B cell (primary cell): ENCODE measurements at regions of chr1 and their contacts with region 1.

Region 1: DNA sequence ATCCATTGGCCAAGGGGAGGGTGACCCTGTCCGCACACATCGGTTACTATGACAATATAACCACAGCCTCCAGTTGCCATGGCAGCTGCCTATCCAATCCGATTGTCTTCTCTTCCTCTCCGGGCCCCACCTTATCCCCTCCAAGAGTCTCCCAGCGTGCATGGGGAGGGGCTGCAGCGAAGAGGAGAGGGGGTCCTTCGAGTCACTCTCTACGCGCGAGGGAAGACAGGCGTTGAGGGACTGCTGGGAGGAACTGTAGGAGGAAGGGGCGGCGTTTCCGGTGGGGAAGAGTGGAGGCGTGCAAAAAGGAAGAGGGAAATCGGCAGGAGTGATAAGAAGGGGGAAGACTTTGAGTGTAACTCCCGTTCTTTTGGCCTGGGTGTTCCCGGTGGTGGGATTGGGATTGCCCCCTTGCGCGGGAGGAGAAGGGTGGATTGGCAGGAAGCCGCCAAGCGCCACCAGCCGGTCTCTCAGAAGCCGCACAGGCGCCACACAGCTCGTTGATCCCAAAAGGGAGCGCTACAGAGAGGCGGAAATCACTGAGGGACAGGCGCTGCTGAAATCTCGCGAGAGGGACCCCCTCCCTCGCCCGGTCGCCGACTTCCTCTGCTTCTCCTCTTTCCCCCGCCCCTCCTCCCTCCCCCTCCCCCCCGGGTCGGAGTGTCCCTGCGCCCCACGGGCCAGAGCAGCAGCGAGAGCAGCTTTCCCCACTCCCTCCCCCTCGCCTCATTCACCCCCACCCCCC is 384 bp upstream of the SMG7 start:
- DNase-seq: peak; percentile 98
- ATAC-seq: peak; percentile 70
- H3K4me3 ChIP-seq: peak overlapping the region; percentile 73 to 89 (median 86)
- H3K4me3 Mint-ChIP-seq: peak overlapping the region; percentile 99
- H3K27ac ChIP-seq: peak overlapping the region; percentile 90 to 99
- H3K27ac Mint-ChIP-seq: peak overlapping the region; percentile 100
- H3K4me1 ChIP-seq: peaks cover 12 to 28% of the 10 kb centered on the region in 2 donors
- H3K4me1 Mint-ChIP-seq: peaks cover 35% of the 10 kb centered on the region
- H3K27me3 ChIP-seq: no peaks in the 10 kb centered on the region
- H3K27me3 Mint-ChIP-seq: no peaks in the 10 kb centered on the region
- CTCF ChIP-seq: no peak

Region 2: GRCh38 chr1:182962554-182963115 is 509.3 kb before region 1 on chr1:
- CTCF ChIA-PET with region 1: no interaction called
- POLR2A ChIA-PET with region 1: no interaction called
- intact Hi-C with region 1: loop called (anchors 2 kb)
- DNase-seq: peak; percentile 81
- ATAC-seq: peak; percentile 100
- H3K4me3 ChIP-seq: peak overlapping the region in 4 of 5 experiments; percentile 3 to 48 (median 25)
- H3K4me3 Mint-ChIP-seq: peak overlapping the region; percentile 54
- H3K27ac ChIP-seq: no peak overlapping the region
- H3K27ac Mint-ChIP-seq: peak overlapping the region; percentile 64
- H3K4me1 ChIP-seq: peaks cover 5 to 7% of the 10 kb centered on the region in 2 donors
- H3K4me1 Mint-ChIP-seq: peaks cover 8% of the 10 kb centered on the region
- H3K27me3 ChIP-seq: peaks cover 0 to 5% (median 0%) of the 10 kb centered on the region in 4 experiments
- H3K27me3 Mint-ChIP-seq: peaks cover 4% of the 10 kb centered on the region
- CTCF ChIP-seq: peak; percentile 89

Region 3: DNA sequence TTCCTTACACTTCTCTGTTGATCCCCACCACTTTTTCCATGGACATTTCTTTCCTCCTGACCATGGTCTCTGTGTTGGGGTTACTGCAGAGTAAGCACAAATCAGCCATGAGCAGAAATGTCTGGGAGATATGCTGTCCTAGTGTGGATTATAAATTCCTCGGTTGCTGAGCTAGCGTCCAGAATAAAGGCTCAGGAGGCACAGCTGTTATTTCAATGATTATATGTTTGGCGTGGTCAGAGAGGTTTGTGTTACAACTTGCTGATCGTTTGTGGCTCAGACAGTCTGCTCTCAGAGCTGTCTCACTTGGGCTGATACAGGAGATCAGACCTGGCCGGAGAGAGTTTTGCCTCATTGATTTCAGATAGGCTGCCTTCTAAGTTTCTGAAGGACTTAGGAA is 323.3 kb before region 1 on chr1:
- CTCF ChIA-PET with region 1: no interaction called
- POLR2A ChIA-PET with region 1: no interaction called
- intact Hi-C with region 1: no loop called
- DNase-seq: no peak
- ATAC-seq: no peak
- H3K4me3 ChIP-seq: no peak overlapping the region
- H3K4me3 Mint-ChIP-seq: no peak overlapping the region
- H3K27ac ChIP-seq: no peak overlapping the region
- H3K27ac Mint-ChIP-seq: no peak overlapping the region
- H3K4me1 ChIP-seq: no peaks in the 10 kb centered on the region
- H3K4me1 Mint-ChIP-seq: no peaks in the 10 kb centered on the region
- H3K27me3 ChIP-seq: no peaks in the 10 kb centered on the region
- H3K27me3 Mint-ChIP-seq: peaks cover 10% of the 10 kb centered on the region
- CTCF ChIP-seq: no peak

Region 4: DNA sequence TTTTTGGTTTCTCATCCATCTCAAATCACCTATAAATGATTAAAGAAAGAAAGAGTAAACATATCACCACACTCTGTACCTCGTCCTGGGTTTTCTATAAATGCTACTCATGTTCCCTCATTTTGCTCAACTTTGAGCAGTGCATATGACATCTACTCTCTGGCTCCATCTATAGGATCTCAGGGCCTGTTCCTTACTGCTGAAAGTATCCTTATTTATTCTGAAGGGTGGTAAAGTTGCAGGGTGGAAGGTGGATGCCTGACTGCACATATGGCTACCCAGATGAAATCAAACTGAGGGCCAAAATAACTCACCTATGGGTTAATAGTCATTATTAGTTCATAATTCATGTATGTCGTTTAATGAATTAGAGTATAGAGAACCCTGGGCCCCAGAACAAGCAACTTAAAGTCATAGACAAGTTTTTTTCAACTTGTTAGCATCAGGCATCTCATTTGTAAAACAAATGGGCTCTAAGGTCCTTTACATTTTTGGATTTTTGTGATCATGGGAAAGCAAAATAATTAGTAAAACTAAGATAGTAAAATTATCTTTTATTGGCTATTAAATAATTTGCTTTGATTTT is 71.8 kb after region 1 on chr1:
- CTCF ChIA-PET with region 1: no interaction called
- POLR2A ChIA-PET with region 1: interaction called, 4 read pairs
- intact Hi-C with region 1: loop called (anchors 1 kb)
- DNase-seq: peak; percentile 59
- ATAC-seq: peak; percentile 63
- H3K4me3 ChIP-seq: no peak overlapping the region
- H3K4me3 Mint-ChIP-seq: no peak overlapping the region
- H3K27ac ChIP-seq: no peak overlapping the region
- H3K27ac Mint-ChIP-seq: no peak overlapping the region
- H3K4me1 ChIP-seq: peaks cover 4 to 5% of the 10 kb centered on the region in 2 donors
- H3K4me1 Mint-ChIP-seq: peaks cover 22% of the 10 kb centered on the region
- H3K27me3 ChIP-seq: no peaks in the 10 kb centered on the region
- H3K27me3 Mint-ChIP-seq: no peaks in the 10 kb centered on the region
- CTCF ChIP-seq: peak; percentile 67

Region 5: DNA sequence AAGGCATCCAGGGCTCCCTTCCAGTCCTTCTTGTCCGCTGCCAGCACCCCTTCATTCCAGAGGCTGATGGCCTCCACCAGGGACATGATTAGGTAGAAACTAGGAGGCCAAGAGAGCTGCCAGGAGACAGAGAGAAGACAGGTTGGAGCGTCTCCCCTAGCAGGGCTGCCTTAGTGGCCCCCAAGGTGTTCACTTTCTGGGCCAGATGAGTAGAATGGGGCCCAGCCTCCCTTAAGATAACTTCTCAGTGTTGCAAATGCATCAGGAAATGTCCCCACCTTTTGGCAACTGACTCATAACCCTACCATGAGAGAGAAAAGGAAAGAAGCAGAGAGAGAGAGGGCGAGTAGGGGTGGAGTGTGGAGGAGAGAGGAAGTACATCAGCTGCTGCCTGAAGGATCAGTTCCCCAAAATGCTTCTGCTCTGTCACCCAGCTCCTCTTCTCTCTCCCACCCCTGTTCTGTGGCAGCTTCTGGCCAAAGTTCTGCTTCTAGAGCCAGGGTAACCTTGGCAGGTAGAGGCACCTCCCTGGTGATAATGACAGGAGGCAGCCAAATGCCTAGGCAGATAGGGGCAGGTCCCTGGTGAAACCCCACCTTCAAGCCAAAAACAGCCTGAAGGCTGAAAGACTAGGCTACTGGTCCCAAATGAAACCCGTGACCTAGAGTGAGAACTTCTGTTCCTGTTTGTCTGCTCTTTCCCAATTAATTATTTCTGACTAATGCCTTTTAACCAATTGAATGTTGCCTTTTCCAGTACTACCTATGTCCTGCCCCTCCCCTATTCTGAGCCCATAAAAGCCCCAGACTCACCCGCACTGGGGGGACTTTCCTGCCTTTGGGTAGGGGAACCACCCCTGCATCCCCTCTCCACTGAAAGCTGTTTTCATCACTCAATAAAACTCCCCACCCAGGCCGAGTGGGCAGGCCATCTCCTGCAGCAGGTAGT is 118.6 kb after region 1 on chr1 and contains the start of gene NCF2:
- CTCF ChIA-PET with region 1: interaction called, 8 read pairs
- POLR2A ChIA-PET with region 1: interaction called, 9 read pairs
- intact Hi-C with region 1: loop called (anchors 1 kb)
- DNase-seq: peak; percentile 91
- ATAC-seq: peak; percentile 84
- H3K4me3 ChIP-seq: peak within 1 kb of the TSS; percentile 20 to 81 (median 42)
- H3K4me3 Mint-ChIP-seq: peak within 1 kb of the TSS; percentile 37
- H3K27ac ChIP-seq: peak within 1 kb of the TSS; percentile 91 to 93
- H3K27ac Mint-ChIP-seq: peak within 1 kb of the TSS; percentile 95
- H3K4me1 ChIP-seq: peaks cover 61 to 64% of the 10 kb centered on the region in 2 donors
- H3K4me1 Mint-ChIP-seq: peaks cover 60% of the 10 kb centered on the region
- H3K27me3 ChIP-seq: no peaks in the 10 kb centered on the region
- H3K27me3 Mint-ChIP-seq: no peaks in the 10 kb centered on the region
- CTCF ChIP-seq: no peak
- total RNA-seq, gene NCF2: 10.5 and 10.7 TPM in 2 replicates

Region 6: DNA sequence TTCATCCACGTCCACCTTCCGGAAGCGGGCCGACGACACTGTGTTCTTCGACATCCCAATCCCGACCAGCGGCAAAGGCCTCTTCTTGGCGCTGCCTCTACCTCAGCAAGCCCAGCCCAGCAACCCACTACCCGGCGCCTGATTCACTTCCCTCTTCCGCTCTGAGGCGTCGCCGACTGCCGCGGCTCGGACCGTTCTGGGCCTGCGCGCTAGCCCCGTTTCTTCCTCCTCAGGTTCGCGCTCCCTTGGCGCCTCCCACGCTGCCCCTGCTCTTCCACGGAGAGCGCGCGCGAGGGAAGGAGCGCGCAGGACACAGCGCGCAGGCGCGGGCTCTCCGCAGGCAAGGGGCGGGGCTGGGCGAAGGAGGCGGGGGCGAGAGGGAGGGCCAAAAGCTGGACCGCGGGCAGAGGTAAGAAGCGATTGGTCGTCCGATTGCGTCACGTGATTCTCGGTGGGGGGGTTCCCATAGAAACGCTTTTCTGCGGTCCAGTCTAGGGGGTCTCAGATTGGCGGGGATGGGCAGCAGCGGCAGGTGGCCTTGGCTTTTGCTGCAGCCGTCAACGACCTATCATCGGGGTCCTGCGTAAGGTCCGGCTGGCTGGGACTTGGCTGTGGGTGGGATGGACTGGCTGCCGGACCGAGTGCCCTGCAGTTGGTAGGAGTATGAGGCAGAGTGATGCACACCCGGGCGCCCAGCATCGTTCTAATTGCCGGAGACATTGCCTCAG is 163.9 kb after region 1 on chr1 and contains the start of gene ARPC5:
- CTCF ChIA-PET with region 1: interaction called, 8 read pairs
- POLR2A ChIA-PET with region 1: interaction called, 4 read pairs
- intact Hi-C with region 1: loop called (anchors 1 kb)
- DNase-seq: peak; percentile 98
- ATAC-seq: peak; percentile 88
- H3K4me3 ChIP-seq: peak within 1 kb of the TSS; percentile 83 to 95 (median 87)
- H3K4me3 Mint-ChIP-seq: peak within 1 kb of the TSS; percentile 100
- H3K27ac ChIP-seq: peak within 1 kb of the TSS; percentile 59 to 80
- H3K27ac Mint-ChIP-seq: peak within 1 kb of the TSS; percentile 99
- H3K4me1 ChIP-seq: peaks cover 20 to 34% of the 10 kb centered on the region in 2 donors
- H3K4me1 Mint-ChIP-seq: peaks cover 42% of the 10 kb centered on the region
- H3K27me3 ChIP-seq: no peaks in the 10 kb centered on the region
- H3K27me3 Mint-ChIP-seq: no peaks in the 10 kb centered on the region
- CTCF ChIP-seq: no peak
- total RNA-seq, gene ARPC5: 91.9 and 103 TPM in 2 replicates

Region 7: DNA sequence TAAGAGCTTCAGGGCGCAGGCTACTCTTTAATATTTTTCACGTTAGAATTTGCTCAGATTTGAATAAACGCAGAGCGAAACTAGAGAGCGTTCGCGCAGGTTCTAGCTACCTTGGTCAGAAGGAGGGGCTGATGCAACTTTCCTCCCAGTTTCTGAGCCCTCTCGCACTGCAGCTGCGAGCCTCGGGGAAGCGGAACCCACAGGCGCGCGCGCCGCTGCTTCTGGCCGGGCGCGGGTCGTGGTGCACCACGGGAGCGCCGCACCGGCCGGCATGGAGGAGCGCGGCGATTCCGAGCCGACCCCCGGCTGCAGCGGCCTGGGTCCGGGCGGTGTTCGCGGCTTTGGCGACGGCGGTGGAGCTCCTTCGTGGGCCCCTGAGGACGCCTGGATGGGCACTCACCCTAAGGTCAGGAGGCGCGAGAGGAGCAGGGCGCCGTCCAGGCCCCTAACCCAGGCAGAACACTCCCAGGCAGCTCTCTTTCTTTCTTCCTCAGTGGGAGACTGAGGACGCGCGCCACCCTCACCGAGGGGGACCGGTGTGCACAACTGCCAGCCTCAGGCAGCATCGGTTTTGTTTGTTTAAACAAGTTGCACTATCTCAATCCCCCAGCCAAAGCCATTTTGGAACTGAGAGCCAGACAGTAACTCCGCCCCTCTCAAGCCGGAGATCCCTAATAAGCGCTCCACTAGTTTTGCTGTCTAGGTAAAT is 579.7 kb after region 1 on chr1 and contains the start of gene TSEN15:
- CTCF ChIA-PET with region 1: no interaction called
- POLR2A ChIA-PET with region 1: interaction called, 7 read pairs
- intact Hi-C with region 1: loop called (anchors 2 kb)
- DNase-seq: peak; percentile 83
- ATAC-seq: peak; percentile 95
- H3K4me3 ChIP-seq: peak within 1 kb of the TSS; percentile 84 to 93 (median 89)
- H3K4me3 Mint-ChIP-seq: peak within 1 kb of the TSS; percentile 99
- H3K27ac ChIP-seq: peak within 1 kb of the TSS; percentile 50 to 80
- H3K27ac Mint-ChIP-seq: peak within 1 kb of the TSS; percentile 93
- H3K4me1 ChIP-seq: peaks cover 15% of the 10 kb centered on the region in 2 donors
- H3K4me1 Mint-ChIP-seq: peaks cover 31% of the 10 kb centered on the region
- H3K27me3 ChIP-seq: peaks cover 0 to 9% (median 2%) of the 10 kb centered on the region in 4 experiments
- H3K27me3 Mint-ChIP-seq: peaks cover 25% of the 10 kb centered on the region
- CTCF ChIP-seq: no peak
- total RNA-seq, gene TSEN15: 25.2 and 30.5 TPM in 2 replicates

Region 8: DNA sequence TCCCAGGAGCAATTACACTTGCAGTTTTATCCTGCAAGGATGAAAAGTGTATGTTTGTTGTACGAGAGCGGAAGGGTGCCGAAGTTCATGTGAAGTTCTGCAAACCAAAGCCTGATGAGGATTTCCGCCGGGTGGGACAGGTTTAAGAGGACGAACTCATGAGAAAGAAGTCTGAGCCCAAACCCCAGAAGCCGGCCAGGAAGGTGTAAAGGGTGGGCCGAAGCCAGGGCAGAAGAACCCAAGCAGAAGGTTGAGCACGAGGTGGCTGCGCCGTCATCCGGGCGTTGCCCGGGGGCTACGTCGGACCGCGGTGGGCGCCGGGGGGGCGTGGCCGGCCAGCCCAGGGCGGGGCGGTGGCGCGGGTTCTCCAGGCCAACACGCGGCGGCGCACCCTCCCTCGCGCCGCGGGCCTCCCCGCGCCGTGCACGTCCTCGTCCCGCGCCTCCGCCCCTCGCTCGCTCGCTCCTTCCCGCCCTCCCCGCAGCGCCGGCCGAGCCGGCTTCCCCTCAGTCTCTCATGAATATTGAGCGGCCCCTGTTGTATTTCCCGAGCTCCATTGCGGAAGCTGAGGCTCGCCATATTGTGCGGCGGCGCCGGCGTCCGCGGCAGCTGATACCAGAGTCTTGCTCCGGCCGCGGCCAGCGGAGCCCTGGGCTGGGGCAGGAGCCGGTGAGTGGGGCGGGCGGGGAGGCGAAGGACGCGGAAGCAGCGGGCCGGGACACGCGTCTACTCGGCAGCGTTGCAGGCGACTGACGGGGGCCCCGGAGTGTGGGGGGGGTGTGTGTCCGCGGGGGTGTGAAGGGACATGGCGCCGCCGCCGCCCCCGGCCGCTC is 1573.3 kb after region 1 on chr1 and contains the start of gene RNF2:
- CTCF ChIA-PET with region 1: no interaction called
- POLR2A ChIA-PET with region 1: interaction called, 3 read pairs
- intact Hi-C with region 1: loop called (anchors 5 kb)
- DNase-seq: peak; percentile 93
- ATAC-seq: peak; percentile 92
- H3K4me3 ChIP-seq: peak within 1 kb of the TSS; percentile 77 to 96 (median 89)
- H3K4me3 Mint-ChIP-seq: peak within 1 kb of the TSS; percentile 87
- H3K27ac ChIP-seq: peak within 1 kb of the TSS; percentile 72 to 82
- H3K27ac Mint-ChIP-seq: peak within 1 kb of the TSS; percentile 93
- H3K4me1 ChIP-seq: peaks cover 16 to 18% of the 10 kb centered on the region in 2 donors
- H3K4me1 Mint-ChIP-seq: peaks cover 35% of the 10 kb centered on the region
- H3K27me3 ChIP-seq: no peaks in the 10 kb centered on the region
- H3K27me3 Mint-ChIP-seq: no peaks in the 10 kb centered on the region
- CTCF ChIP-seq: no peak
- total RNA-seq, gene RNF2: 24.2 and 29.5 TPM in 2 replicates